ENCODE measurements at regions of chr17 and their contacts with region 1.

Region 1: GRCh38 chr17:44708401-44709181 is at the start of gene DBF4B:
- DNase-seq: peak; percentile 78
- ATAC-seq: peak; percentile 94
- H3K4me3 ChIP-seq: peak within 1 kb of the TSS; percentile 99
- H3K27ac ChIP-seq: peak within 1 kb of the TSS; percentile 85
- H3K4me1 ChIP-seq: peaks cover 5% of the 10 kb centered on the region; the same call in 1 of the 2 replicates
- H3K27me3 ChIP-seq: no peaks in the 10 kb centered on the region
- CTCF ChIP-seq: no peak
- EP300 ChIP-seq: no peak
- POLR2A ChIP-seq: peak; percentile 71
- RAD21 ChIP-seq: no peak
- polyA plus RNA-seq, gene DBF4B: 2.4 to 2.5 TPM

Region 2: DNA sequence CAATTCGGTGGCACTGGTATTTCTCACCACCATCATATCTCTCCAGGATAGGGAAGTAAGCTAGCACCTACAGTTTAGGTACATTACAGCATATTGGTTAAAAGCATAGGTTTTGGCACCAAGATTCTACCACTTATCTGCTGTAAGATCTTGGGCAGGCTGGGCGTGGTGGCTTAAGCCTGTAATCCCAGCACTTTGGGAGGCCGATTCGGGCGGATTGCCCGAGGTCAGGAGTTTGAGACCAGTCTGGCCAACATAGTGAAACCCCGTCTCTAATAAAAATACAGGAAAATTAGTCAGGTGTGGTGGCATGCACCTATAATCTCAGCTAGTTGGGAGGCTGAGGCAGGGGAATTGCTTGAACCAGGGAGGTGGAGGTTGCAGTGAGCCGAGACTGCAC is 256.8 kb before region 1 on chr17:
- CTCF ChIA-PET with region 1: no interaction called
- POLR2A ChIA-PET with region 1: no interaction called
- RAD21 ChIA-PET with region 1: no interaction called
- SMC1A ChIA-PET with region 1: no interaction called
- in situ Hi-C with region 1: no loop called
- intact Hi-C with region 1: no loop called
- DNase-seq: no peak
- ATAC-seq: no peak
- H3K4me3 ChIP-seq: no peak overlapping the region
- H3K27ac ChIP-seq: no peak overlapping the region
- H3K4me1 ChIP-seq: no peaks in the 10 kb centered on the region
- H3K27me3 ChIP-seq: no peaks in the 10 kb centered on the region
- CTCF ChIP-seq: no peak
- EP300 ChIP-seq: no peak
- POLR2A ChIP-seq: no peak
- RAD21 ChIP-seq: no peak

Region 3: GRCh38 chr17:44664867-44665266 is 43.7 kb before region 1 on chr17:
- CTCF ChIA-PET with region 1: no interaction called
- POLR2A ChIA-PET with region 1: no interaction called
- RAD21 ChIA-PET with region 1: no interaction called
- SMC1A ChIA-PET with region 1: no interaction called
- in situ Hi-C with region 1: no loop called
- intact Hi-C with region 1: no loop called
- DNase-seq: no peak
- ATAC-seq: no peak
- H3K4me3 ChIP-seq: no peak overlapping the region
- H3K27ac ChIP-seq: no peak overlapping the region
- H3K4me1 ChIP-seq: no peaks in the 10 kb centered on the region
- H3K27me3 ChIP-seq: no peaks in the 10 kb centered on the region; a peak in 1 of 4 replicates
- CTCF ChIP-seq: no peak
- EP300 ChIP-seq: no peak
- POLR2A ChIP-seq: no peak
- RAD21 ChIP-seq: no peak

Region 4: GRCh38 chr17:44689477-44690217 is 18.9 kb before region 1 on chr17 and contains the start of gene CCDC43:
- CTCF ChIA-PET with region 1: interaction called, 28 read pairs
- POLR2A ChIA-PET with region 1: interaction called, 11 read pairs
- RAD21 ChIA-PET with region 1: interaction called, 4 read pairs
- SMC1A ChIA-PET with region 1: interaction called, 4 read pairs
- in situ Hi-C with region 1: no loop called
- intact Hi-C with region 1: no loop called
- DNase-seq: peak; percentile 75
- ATAC-seq: peak; percentile 97
- H3K4me3 ChIP-seq: peak within 1 kb of the TSS; percentile 96
- H3K27ac ChIP-seq: peak within 1 kb of the TSS; percentile 69
- H3K4me1 ChIP-seq: peaks cover 3% of the 10 kb centered on the region; the same call in 1 of the 2 replicates
- H3K27me3 ChIP-seq: no peaks in the 10 kb centered on the region
- CTCF ChIP-seq: no peak
- EP300 ChIP-seq: no peak
- POLR2A ChIP-seq: peak; percentile 97
- RAD21 ChIP-seq: no peak
- polyA plus RNA-seq, gene CCDC43: 10.8 to 15.7 TPM

Region 5: DNA sequence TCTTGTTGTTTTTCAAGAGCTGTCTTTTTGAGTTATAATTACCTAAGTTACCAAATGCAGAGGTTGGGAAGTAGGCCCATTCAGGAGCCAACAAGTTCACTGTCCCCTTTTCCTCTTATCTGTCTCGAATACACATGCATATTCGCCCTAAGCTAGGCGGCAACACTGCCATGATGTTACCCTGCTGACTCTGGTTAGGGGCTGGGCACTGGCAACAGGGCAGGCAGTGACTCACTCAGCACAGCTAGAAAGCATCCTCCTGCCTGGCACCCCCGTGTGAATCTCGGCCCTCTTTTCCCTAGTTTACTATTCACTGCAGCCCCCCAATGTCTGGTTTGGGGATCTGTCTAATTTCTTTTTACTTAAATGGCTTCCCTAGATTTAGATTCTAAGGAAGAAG is 13.7 kb after region 1 on chr17:
- CTCF ChIA-PET with region 1: no interaction called
- POLR2A ChIA-PET with region 1: interaction called, 13 read pairs
- RAD21 ChIA-PET with region 1: no interaction called
- SMC1A ChIA-PET with region 1: no interaction called
- in situ Hi-C with region 1: no loop called
- intact Hi-C with region 1: no loop called
- DNase-seq: no peak
- ATAC-seq: no peak
- H3K4me3 ChIP-seq: no peak overlapping the region
- H3K27ac ChIP-seq: no peak overlapping the region
- H3K4me1 ChIP-seq: no peaks in the 10 kb centered on the region
- H3K27me3 ChIP-seq: no peaks in the 10 kb centered on the region
- CTCF ChIP-seq: no peak
- EP300 ChIP-seq: no peak
- POLR2A ChIP-seq: no peak
- RAD21 ChIP-seq: no peak

Region 6: GRCh38 chr17:44906010-44906646 is 197.5 kb after region 1 on chr17:
- CTCF ChIA-PET with region 1: no interaction called
- POLR2A ChIA-PET with region 1: no interaction called
- RAD21 ChIA-PET with region 1: no interaction called
- SMC1A ChIA-PET with region 1: no interaction called
- in situ Hi-C with region 1: no loop called
- intact Hi-C with region 1: no loop called
- DNase-seq: no peak
- ATAC-seq: no peak
- H3K4me3 ChIP-seq: no peak overlapping the region
- H3K27ac ChIP-seq: no peak overlapping the region
- H3K4me1 ChIP-seq: peaks cover 5% of the 10 kb centered on the region
- H3K27me3 ChIP-seq: no peaks in the 10 kb centered on the region; a peak in 1 of 4 replicates
- CTCF ChIP-seq: no peak
- EP300 ChIP-seq: no peak
- POLR2A ChIP-seq: no peak
- RAD21 ChIP-seq: no peak

Measured in GM12878 (cell line).